ENCODE measurements at regions of chr16 and their contacts with region 1.

Region 1: DNA sequence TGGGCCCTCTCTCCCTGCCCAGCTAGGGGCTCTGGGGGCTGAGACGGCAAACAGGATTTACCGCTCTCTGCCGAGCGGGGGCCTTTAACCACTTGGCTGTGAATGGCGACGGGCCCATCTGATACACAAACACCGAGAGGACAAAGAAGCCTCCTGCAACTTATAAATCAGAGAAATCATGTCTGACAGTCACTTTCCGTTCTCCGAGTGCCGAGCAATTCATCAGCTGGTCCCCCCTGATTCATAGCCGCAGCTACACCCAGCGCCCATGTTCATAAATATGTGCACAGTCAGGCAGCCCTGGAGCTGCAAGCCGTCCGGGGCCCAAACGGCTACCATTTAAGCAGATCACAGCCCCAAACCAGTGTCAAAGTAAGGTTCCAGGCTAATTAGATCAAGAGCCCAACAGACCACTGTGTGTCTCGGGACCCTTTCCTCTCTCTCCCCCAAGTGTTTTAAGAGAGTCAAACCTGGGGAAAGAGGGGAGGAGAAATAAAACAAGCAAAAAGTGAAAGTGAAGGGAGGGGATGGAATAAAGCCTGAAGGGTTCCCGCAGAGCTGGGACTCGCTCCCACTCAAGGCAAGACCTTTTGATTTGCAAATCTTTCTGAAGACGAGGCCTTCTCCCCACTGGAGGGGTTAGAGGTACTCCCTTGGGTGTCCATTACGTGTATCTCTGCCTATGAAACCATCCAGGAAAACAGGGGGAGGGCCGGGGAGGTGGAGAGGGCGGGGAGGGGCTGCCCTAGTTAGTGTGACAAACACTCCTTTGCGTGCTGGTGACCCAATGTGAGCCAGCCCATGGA is 154.7 kb downstream of the C16orf78 start:
- DNase-seq: peak; percentile 64
- H3K4me3 Mint-ChIP-seq: peak overlapping the region; percentile 77
- H3K27ac Mint-ChIP-seq: no peak overlapping the region
- H3K4me1 Mint-ChIP-seq: peaks cover 10% of the 10 kb centered on the region
- H3K27me3 Mint-ChIP-seq: no peaks in the 10 kb centered on the region

Region 2: GRCh38 chr16:49463529-49463928 is 64.7 kb before region 1 on chr16:
- CTCF ChIA-PET with region 1: no interaction called
- intact Hi-C with region 1: loop called (anchors 5 kb)
- DNase-seq: peak; percentile 92
- H3K4me3 Mint-ChIP-seq: peak overlapping the region; percentile 7
- H3K27ac Mint-ChIP-seq: peak overlapping the region; percentile 50
- H3K4me1 Mint-ChIP-seq: peaks cover 44% of the 10 kb centered on the region
- H3K27me3 Mint-ChIP-seq: no peaks in the 10 kb centered on the region

Measured in activated naive CD4-positive, alpha-beta T cell treated with anti-CD3 and anti-CD28 coated beads for 36 hours (primary cell).